ENCODE measurements at regions of chr1 and their contacts with region 1.

Region 1: GRCh38 chr1:45750298-45751038 is at the start of gene IPP:
- DNase-seq: peak; percentile 73 to 97 (median 90)
- ATAC-seq: peak; percentile 90
- H3K4me3 ChIP-seq: peak within 1 kb of the TSS; percentile 82 to 90
- H3K4me3 Mint-ChIP-seq: peak within 1 kb of the TSS; percentile 97
- H3K27ac ChIP-seq: peak within 1 kb of the TSS; percentile 83 to 99
- H3K27ac Mint-ChIP-seq: peak within 1 kb of the TSS; percentile 100
- H3K4me1 ChIP-seq: peaks cover 17% of the 10 kb centered on the region
- H3K4me1 Mint-ChIP-seq: peaks cover 41% of the 10 kb centered on the region
- H3K27me3 ChIP-seq: no peaks in the 10 kb centered on the region
- H3K27me3 Mint-ChIP-seq: no peaks in the 10 kb centered on the region
- CTCF ChIP-seq: no peak
- total RNA-seq, gene IPP: 4.9 to 5.6 TPM

Region 2: DNA sequence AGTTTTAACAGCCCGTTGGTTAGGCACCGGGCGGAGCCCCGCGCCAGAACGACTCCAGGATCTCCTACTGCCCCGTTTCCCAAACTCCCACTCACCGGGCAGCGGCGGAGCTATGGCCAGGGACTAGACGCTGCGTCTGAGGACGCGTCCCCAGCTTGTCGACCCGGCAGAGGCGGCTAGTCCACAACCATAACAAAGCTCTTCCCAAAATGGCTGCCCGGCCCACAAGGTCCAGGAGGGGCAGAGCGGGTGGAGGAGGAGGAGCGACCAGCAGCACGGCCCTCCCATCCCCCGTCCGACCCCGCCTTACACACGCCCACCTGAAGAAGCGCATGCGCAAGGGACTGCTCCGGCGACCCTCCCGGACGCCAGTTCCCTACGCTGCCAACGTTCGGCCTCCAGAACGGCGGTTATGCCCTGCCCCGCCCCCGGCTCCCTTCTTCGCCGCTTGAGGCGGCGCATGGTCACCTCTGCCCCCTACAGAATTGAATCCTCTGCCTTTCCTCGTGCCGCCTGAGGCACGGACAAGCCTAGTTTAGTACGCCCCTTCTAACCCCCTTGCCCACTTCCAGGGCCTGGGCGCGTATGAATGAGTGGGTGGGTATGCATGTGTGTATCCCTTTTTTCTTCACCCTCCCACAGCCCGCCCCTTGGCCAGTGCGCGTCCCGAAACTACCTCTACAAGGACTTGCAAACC is 64.0 kb before region 1 on chr1 and contains the start of gene GPBP1L1:
- CTCF ChIA-PET with region 1: no interaction called
- POLR2A ChIA-PET with region 1: interaction called, 3 read pairs
- intact Hi-C with region 1: loop called (anchors 1 to 2 kb)
- DNase-seq: peak; percentile 95 to 98 (median 98)
- ATAC-seq: peak; percentile 72
- H3K4me3 ChIP-seq: peak within 1 kb of the TSS; percentile 99
- H3K4me3 Mint-ChIP-seq: peak within 1 kb of the TSS; percentile 97
- H3K27ac ChIP-seq: peak within 1 kb of the TSS; percentile 84 to 92
- H3K27ac Mint-ChIP-seq: peak within 1 kb of the TSS; percentile 100
- H3K4me1 ChIP-seq: peaks cover 39% of the 10 kb centered on the region
- H3K4me1 Mint-ChIP-seq: peaks cover 59% of the 10 kb centered on the region
- H3K27me3 ChIP-seq: no peaks in the 10 kb centered on the region
- H3K27me3 Mint-ChIP-seq: no peaks in the 10 kb centered on the region
- CTCF ChIP-seq: no peak
- total RNA-seq, gene GPBP1L1: 125 to 128 TPM

Measured in CD8-positive, alpha-beta T cell (primary cell).